ENCODE measurements at regions of chr7 and their contacts with region 1.

Region 1: DNA sequence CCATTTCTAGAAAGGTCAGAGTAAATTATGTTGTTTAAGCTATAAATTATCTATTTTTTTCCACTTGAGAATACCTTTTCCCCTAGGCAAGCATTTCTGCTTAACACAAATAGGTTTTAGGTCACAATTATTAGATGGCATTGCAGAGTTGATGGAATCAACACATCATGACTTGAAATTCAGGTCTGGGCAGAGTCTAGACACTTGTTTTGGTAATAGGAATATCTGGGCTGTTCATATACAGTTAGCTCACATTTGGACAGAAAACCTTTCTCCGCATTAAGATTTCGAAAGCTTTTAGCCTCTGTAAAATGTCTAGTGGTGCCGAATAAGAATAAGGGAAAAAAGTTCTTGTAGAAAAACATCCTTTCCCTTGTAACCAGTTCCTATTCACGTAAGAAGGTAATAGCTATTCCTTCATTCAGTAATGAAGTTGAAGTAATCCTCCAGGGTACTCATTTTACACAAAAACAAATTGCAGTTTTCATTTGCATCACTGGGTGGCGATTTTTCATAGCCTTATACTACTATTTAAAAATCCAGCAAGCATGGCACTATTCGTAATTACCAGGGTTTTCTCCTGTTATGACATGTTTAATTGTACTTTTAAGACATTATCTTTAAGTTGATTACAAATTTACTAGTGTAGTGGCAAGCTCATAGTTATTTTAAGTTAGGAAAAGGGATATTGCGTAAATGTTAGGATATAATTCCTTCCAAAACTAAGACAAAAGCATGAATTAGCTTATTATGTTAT is 37.0 kb downstream of the RPA3 start:
- DNase-seq: no peak
- ATAC-seq: peak; percentile 86

Region 2: DNA sequence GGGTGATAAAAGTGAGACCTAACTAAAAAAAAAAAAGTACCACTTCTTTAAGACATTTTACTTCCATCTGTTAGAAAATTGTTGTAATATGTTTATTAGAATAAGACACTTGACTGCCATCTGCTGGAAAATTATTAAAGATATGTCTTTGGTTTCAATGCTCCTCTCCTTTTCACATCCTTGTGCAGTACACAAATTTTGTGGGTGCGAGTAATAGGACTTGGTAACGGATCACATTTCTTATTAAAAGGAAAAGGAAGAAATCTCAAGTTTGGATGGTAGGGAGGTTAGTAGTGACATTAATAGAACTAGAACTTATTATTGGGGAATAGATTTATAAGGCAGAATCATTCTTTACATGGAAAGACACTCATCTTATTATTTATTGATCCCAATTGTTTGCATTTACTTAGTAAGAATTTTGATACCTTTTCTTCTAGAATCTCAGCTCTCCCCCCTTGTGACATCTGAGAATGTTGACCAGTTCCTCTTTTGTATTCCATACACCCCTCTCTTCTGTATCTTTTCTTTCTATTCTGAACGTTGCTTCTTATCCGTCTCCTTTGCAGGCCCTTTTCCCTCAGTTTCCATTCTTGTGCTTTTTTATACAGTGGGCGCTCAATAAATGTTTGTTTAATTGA is 80.1 kb after region 1 on chr7:
- intact Hi-C with region 1: loop called (anchors 1 kb)
- DNase-seq: no peak
- ATAC-seq: peak; percentile 60